ENCODE measurements at regions of chr1 and their contacts with region 1.

Region 1: DNA sequence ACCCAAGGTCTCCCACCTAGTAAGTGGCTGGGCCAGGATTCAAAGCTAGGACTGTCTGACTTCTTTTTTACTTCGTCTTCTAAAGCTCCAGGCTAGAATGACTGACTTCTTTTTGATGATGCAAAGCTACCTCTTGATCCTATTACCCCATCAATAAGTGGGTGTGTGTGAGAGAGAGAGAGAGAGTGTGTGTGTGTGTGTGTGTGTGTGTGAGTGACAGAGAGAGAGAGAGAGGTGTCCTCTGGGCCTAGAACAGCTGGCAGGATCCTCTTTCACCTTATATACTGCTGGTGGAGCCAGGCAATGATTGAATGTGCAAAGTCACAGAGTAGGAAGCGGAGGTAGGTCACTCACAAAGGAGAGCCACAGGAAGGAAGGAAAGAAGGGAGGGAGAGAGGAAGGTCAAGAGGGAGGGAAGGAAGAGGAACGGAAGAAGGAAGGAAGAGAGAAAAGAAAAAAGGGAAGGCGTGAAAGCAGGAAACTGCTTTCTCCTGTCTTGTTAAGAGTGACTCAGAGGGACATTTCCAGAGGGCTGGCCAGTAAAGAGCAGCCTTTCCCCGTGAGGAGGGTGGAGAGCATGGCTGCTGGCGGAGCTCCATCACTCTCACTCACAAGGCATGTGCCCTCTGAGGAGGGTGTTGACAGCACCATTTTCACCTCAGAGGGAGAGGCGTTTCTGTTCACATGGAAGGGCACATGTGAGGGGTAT is 68.9 kb downstream of the CDC7 start:
- DNase-seq: peak; percentile 82
- H3K4me3 ChIP-seq: no peak overlapping the region
- H3K27ac ChIP-seq: peak overlapping the region; percentile 16
- H3K4me1 ChIP-seq: peaks cover 23% of the 10 kb centered on the region
- H3K27me3 ChIP-seq: no peaks in the 10 kb centered on the region
- CTCF ChIP-seq: no peak
- POLR2A ChIP-seq: no peak

Region 2: GRCh38 chr1:89615676-89616598 is 1953.6 kb before region 1 on chr1:
- CTCF ChIA-PET with region 1: no interaction called
- POLR2A ChIA-PET with region 1: no interaction called
- dilution Hi-C with region 1: no loop called
- intact Hi-C with region 1: no loop called
- DNase-seq: peak; percentile 25
- H3K4me3 ChIP-seq: no peak overlapping the region
- H3K27ac ChIP-seq: no peak overlapping the region
- H3K4me1 ChIP-seq: no peaks in the 10 kb centered on the region
- H3K27me3 ChIP-seq: no peaks in the 10 kb centered on the region
- CTCF ChIP-seq: peak; percentile 36 to 61
- POLR2A ChIP-seq: no peak

Region 3: GRCh38 chr1:91545506-91546300 is 23.9 kb before region 1 on chr1:
- CTCF ChIA-PET with region 1: no interaction called
- POLR2A ChIA-PET with region 1: no interaction called
- dilution Hi-C with region 1: no loop called
- intact Hi-C with region 1: no loop called
- DNase-seq: peak; percentile 6
- H3K4me3 ChIP-seq: no peak overlapping the region
- H3K27ac ChIP-seq: no peak overlapping the region
- H3K4me1 ChIP-seq: no peaks in the 10 kb centered on the region
- H3K27me3 ChIP-seq: no peaks in the 10 kb centered on the region
- CTCF ChIP-seq: no peak
- POLR2A ChIP-seq: no peak

Region 4: DNA sequence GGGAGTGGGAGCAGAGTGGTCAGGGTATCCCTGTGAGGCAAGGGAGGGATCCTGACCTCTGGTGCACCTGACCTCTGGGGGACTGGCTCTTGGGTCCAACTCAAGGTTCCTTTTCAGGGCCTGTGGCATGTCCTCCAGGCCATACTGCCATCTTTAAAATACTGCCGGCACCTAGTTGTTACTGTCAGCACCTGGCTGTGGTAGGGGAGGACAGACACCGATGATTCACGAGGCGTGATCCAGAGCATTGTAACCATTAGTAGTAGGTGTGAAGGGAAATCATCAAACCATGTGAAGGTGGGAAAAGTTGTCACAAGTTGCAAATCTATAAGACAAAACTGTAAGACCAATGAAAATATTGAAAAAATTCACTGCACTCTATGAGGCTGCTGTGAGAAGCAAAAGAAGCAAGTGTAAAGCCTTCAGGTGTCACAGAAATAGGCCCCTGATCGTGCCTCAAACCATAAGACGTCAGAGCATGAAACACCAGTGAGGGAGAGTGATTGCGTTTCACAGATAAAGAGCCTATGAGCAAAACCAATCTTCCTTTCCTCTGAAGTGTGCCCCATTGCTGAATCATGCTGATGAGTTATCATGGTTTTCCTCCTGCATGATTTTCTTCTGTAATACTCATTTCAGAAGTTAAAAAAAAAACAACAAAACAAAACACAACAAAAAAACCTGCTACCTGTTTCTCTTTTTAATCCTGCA is 13.6 kb before region 1 on chr1:
- CTCF ChIA-PET with region 1: interaction called, 11 read pairs
- POLR2A ChIA-PET with region 1: no interaction called
- dilution Hi-C with region 1: no loop called
- intact Hi-C with region 1: no loop called
- DNase-seq: peak; percentile 58
- H3K4me3 ChIP-seq: no peak overlapping the region
- H3K27ac ChIP-seq: peak overlapping the region; percentile 67
- H3K4me1 ChIP-seq: peaks cover 28% of the 10 kb centered on the region
- H3K27me3 ChIP-seq: no peaks in the 10 kb centered on the region
- CTCF ChIP-seq: no peak
- POLR2A ChIP-seq: no peak

Region 5: DNA sequence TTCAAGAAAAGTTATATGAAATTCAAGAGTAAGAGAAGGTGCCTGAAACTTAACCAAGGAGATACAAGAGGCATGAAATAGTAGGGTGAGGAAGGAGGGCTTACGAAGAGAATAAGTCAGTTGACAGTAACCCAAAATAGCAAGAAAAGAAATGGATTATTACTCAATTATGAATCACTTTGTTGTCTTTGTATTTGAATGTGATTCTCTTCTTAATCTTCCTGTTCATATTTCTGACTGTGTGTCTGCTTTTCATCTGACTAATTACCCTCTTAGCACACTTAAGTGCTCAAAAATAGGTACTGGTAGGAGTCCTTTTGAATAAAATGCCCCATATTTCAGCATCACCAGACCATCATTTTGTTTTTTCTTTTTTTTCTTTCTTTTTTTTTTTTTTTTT is 689.8 kb after region 1 on chr1:
- CTCF ChIA-PET with region 1: no interaction called
- POLR2A ChIA-PET with region 1: no interaction called
- dilution Hi-C with region 1: no loop called
- intact Hi-C with region 1: no loop called
- DNase-seq: no peak
- H3K4me3 ChIP-seq: no peak overlapping the region
- H3K27ac ChIP-seq: no peak overlapping the region
- H3K4me1 ChIP-seq: no peaks in the 10 kb centered on the region
- H3K27me3 ChIP-seq: no peaks in the 10 kb centered on the region
- CTCF ChIP-seq: no peak
- POLR2A ChIP-seq: no peak

Measured in endothelial cell of umbilical vein (primary cell).